Endothelial cell of umbilical vein (primary cell): ENCODE measurements at regions of chr9 and their contacts with region 1.

Region 1: GRCh38 chr9:79939819-79940218 is 368.1 kb downstream of the TLE4 start:
- DNase-seq: peak; percentile 32
- H3K4me3 ChIP-seq: no peak overlapping the region
- H3K27ac ChIP-seq: no peak overlapping the region
- H3K4me1 ChIP-seq: peaks cover 19% of the 10 kb centered on the region
- H3K27me3 ChIP-seq: no peaks in the 10 kb centered on the region
- CTCF ChIP-seq: no peak
- POLR2A ChIP-seq: no peak

Region 2: GRCh38 chr9:79809931-79810330 is 129.9 kb before region 1 on chr9:
- CTCF ChIA-PET with region 1: no interaction called
- POLR2A ChIA-PET with region 1: no interaction called
- dilution Hi-C with region 1: no loop called
- intact Hi-C with region 1: loop called (anchors 2 kb)
- DNase-seq: peak; percentile 72
- H3K4me3 ChIP-seq: peak overlapping the region in 1 of 3 experiments; percentile 44
- H3K27ac ChIP-seq: peak overlapping the region; percentile 31
- H3K4me1 ChIP-seq: peaks cover 23% of the 10 kb centered on the region
- H3K27me3 ChIP-seq: no peaks in the 10 kb centered on the region
- CTCF ChIP-seq: no peak
- POLR2A ChIP-seq: no peak

Region 3: GRCh38 chr9:80040457-80040856 is 100.6 kb after region 1 on chr9:
- CTCF ChIA-PET with region 1: no interaction called
- POLR2A ChIA-PET with region 1: no interaction called
- dilution Hi-C with region 1: no loop called
- intact Hi-C with region 1: no loop called
- DNase-seq: no peak
- H3K4me3 ChIP-seq: no peak overlapping the region
- H3K27ac ChIP-seq: no peak overlapping the region
- H3K4me1 ChIP-seq: no peaks in the 10 kb centered on the region
- H3K27me3 ChIP-seq: no peaks in the 10 kb centered on the region
- CTCF ChIP-seq: no peak
- POLR2A ChIP-seq: no peak